ENCODE measurements at regions of chr13 and their contacts with region 1.

Region 1: GRCh38 chr13:79541426-79542049 is 60.6 kb downstream of the NDFIP2 start:
- DNase-seq: peak in 3 of 9 experiments; percentile 13 to 80 (median 75)
- ATAC-seq: peak; percentile 71
- H3K4me3 ChIP-seq: no peak overlapping the region
- H3K4me3 Mint-ChIP-seq: no peak overlapping the region
- H3K27ac ChIP-seq: no peak overlapping the region
- H3K27ac Mint-ChIP-seq: no peak overlapping the region
- H3K4me1 ChIP-seq: no peaks in the 10 kb centered on the region
- H3K4me1 Mint-ChIP-seq: no peaks in the 10 kb centered on the region
- H3K27me3 ChIP-seq: no peaks in the 10 kb centered on the region
- H3K27me3 Mint-ChIP-seq: no peaks in the 10 kb centered on the region
- CTCF ChIP-seq: peak; percentile 95

Region 2: DNA sequence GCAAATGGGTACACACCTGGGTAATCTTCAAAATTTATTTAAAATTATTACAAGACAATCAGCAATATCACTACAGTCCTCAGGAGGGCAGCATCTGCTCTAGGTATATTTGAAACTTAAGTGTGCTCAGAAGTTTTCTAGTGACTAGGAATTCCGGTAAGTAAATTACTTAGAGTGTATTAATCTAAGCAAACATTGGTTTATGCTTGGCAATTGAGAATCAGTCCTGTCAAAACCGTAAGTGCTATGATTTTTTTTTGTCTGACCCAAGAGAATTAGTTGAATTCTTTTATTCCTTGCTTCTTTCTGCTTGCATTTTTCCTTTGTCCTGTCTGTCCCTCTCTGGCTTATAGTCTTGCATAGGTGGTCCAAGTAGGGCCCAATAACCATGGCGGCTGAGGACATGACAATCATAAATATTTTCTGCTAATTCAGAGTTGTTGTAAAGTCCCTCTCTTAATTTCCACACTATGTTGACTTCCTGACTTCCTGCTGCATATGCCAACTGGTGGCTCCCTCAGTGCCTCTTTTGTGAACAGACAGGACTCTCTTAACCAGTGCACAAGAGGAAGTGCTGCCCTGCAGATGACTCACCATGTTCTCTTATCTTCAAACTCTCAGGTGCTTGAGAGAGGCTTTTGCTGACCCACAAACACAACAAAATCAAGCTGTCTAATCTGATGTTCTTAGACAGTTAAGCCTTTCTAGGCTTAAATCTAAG is 1761.8 kb before region 1 on chr13:
- CTCF ChIA-PET with region 1: no interaction called
- POLR2A ChIA-PET with region 1: no interaction called
- intact Hi-C with region 1: loop called in 1 of 2 experiments (anchors 10 kb)
- DNase-seq: peak in 3 of 9 experiments; percentile 14 to 66 (median 57)
- ATAC-seq: peak; percentile 46
- H3K4me3 ChIP-seq: no peak overlapping the region
- H3K4me3 Mint-ChIP-seq: no peak overlapping the region
- H3K27ac ChIP-seq: no peak overlapping the region
- H3K27ac Mint-ChIP-seq: no peak overlapping the region
- H3K4me1 ChIP-seq: peaks cover 6% of the 10 kb centered on the region
- H3K4me1 Mint-ChIP-seq: peaks cover 12% of the 10 kb centered on the region
- H3K27me3 ChIP-seq: no peaks in the 10 kb centered on the region
- H3K27me3 Mint-ChIP-seq: peaks cover 3% of the 10 kb centered on the region
- CTCF ChIP-seq: peak; percentile 65

Measured in CD8-positive, alpha-beta T cell (primary cell).